Right lobe of liver (tissue), 6 donors: ENCODE measurements at regions of chr20 and their contacts with region 1.

Region 1: DNA sequence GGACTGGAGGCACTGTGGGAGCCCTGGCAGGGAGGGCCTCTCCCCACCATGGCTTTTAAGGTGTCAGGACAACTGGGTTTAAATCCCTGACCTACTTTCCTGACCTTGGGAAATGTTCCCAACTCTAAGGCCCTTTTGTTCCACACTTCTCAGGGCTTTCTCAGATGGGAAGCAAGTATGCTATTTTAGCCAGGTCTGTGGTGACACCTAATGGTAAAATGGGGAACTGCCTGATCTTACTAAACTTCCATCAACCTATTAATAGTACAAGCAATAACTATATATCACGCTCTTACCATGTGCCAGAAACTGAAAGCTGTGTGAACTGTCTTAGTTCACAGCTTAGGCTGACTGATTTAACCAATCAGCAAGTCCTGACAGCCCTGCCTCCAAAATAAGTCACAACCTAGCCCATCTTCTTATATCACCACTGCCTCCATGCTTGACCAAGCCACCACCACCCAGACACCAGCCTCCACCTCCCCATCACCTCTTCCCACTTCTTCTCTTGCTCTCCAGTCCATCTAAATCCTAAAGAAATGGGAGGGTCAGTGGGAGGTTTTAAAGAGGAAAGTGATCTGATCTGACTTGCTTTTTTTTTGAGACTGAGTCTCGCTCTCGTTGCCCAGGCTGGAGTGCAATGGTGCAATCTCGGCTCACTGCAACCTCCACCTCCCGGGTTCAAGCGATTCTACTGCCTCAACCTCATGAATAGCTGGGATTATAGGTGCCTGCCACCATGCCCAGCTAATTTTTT is 6.9 kb upstream of the BLCAP start:
- DNase-seq: peak in 1 of 3 donors; percentile 44
- ATAC-seq: peak; percentile 95 to 98 (median 97)
- H3K4me3 ChIP-seq: no peak overlapping the region
- H3K27ac ChIP-seq: no peak overlapping the region
- H3K4me1 ChIP-seq: no peaks in the 10 kb centered on the region
- H3K27me3 ChIP-seq: no peaks in the 10 kb centered on the region
- CTCF ChIP-seq: peak; percentile 83 to 93 (median 86)
- POLR2A ChIP-seq: no peak

Region 2: GRCh38 chr20:37192137-37192854 is 342.3 kb before region 1 on chr20:
- intact Hi-C with region 1: loop called in 1 of 2 experiments (anchors 10 kb)
- DNase-seq: peak; percentile 84 to 92 (median 88)
- ATAC-seq: peak; percentile 97 to 99 (median 98)
- H3K4me3 ChIP-seq: no peak overlapping the region
- H3K27ac ChIP-seq: no peak overlapping the region
- H3K4me1 ChIP-seq: peaks cover 0 to 22% (median 0%) of the 10 kb centered on the region in 4 donors
- H3K27me3 ChIP-seq: no peaks in the 10 kb centered on the region
- CTCF ChIP-seq: peak; percentile 82 to 95 (median 94)
- POLR2A ChIP-seq: no peak

Region 3: DNA sequence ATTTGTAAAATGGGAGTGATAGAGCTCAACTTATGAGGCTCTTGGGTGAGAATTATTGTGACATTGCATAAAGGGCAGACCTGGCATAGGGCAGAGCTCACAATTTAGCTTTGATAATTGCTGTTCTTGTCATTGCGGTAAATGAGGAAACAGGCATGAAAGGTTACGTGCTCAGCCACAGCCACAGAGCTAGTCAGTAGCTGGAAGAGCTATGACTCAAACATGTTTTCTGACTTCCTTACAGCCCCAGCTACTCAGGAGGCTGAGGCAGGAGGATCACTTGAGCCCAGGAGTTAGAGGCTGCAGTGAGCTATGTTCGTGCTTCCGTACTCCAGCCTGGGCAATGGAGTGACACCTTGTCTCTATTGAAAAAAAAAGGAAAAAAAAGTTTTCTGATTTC is 269.4 kb before region 1 on chr20:
- intact Hi-C with region 1: loop called (anchors 5 kb)
- DNase-seq: no peak
- ATAC-seq: no peak
- H3K4me3 ChIP-seq: no peak overlapping the region
- H3K27ac ChIP-seq: no peak overlapping the region
- H3K4me1 ChIP-seq: no peaks in the 10 kb centered on the region
- H3K27me3 ChIP-seq: no peaks in the 10 kb centered on the region
- CTCF ChIP-seq: no peak
- POLR2A ChIP-seq: no peak

Region 4: GRCh38 chr20:37270576-37271420 is 263.8 kb before region 1 on chr20:
- intact Hi-C with region 1: loop called (anchors 5 kb)
- DNase-seq: peak in 1 of 3 donors; percentile 28
- ATAC-seq: peak; percentile 36 to 55 (median 42)
- H3K4me3 ChIP-seq: no peak overlapping the region
- H3K27ac ChIP-seq: peak overlapping the region in 1 of 3 donors; percentile 52
- H3K4me1 ChIP-seq: peaks cover 0 to 6% (median 0%) of the 10 kb centered on the region in 4 donors
- H3K27me3 ChIP-seq: no peaks in the 10 kb centered on the region
- CTCF ChIP-seq: no peak
- POLR2A ChIP-seq: no peak

Region 5: DNA sequence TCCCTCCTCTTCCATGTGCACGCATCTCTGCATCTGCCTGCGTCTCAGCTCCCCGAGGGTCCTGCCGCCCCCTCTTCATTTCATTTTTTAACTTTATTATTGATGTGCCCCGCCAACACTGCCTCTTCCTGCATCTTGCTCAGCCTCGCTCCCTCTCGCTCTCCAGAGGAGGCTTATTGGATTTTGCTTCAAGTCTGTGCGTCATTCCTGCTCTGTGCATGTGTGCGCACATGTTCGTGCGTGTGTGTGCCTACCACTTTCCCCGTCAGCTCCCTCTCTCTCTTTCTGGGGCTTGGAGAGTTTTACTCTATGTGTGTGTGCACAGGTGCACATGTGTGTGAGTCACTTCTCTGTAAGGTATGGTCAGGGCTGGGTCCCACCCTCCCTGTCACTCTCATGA is 85.3 kb before region 1 on chr20:
- intact Hi-C with region 1: no loop called
- DNase-seq: no peak
- ATAC-seq: no peak
- H3K4me3 ChIP-seq: no peak overlapping the region
- H3K27ac ChIP-seq: no peak overlapping the region
- H3K4me1 ChIP-seq: no peaks in the 10 kb centered on the region
- H3K27me3 ChIP-seq: no peaks in the 10 kb centered on the region
- CTCF ChIP-seq: no peak
- POLR2A ChIP-seq: no peak